ENCODE measurements at regions of chr7 and their contacts with region 1.

Region 1: GRCh38 chr7:101058355-101058754 is 26.9 kb upstream of the TRIM56 start:
- DNase-seq: peak; percentile 76 to 82 (median 80)
- H3K4me3 ChIP-seq: no peak overlapping the region
- H3K27ac ChIP-seq: no peak overlapping the region
- H3K4me1 ChIP-seq: no peaks in the 10 kb centered on the region
- H3K27me3 ChIP-seq: peaks cover 2% of the 10 kb centered on the region
- CTCF ChIP-seq: no peak

Region 2: GRCh38 chr7:100894860-100895421 is 163.4 kb before region 1 on chr7:
- intact Hi-C with region 1: loop called (anchors 5 kb)
- DNase-seq: peak; percentile 80 to 89 (median 86)
- H3K4me3 ChIP-seq: peak overlapping the region in 1 of 3 donors; percentile 35
- H3K27ac ChIP-seq: no peak overlapping the region
- H3K4me1 ChIP-seq: peaks cover 0 to 8% (median 0%) of the 10 kb centered on the region in 3 donors
- H3K27me3 ChIP-seq: peaks cover 5% of the 10 kb centered on the region
- CTCF ChIP-seq: peak; percentile 81

Measured in kidney (tissue), 22 donors.